HEK293 (cell line): ENCODE measurements at regions of chr17 and their contacts with region 1.

Region 1: GRCh38 chr17:78082988-78083387 is 45.6 kb downstream of the TMC6 start:
- H3K4me3 ChIP-seq: no peak overlapping the region
- H3K27ac ChIP-seq: no peak overlapping the region
- H3K4me1 ChIP-seq: no peaks in the 10 kb centered on the region
- CTCF ChIP-seq: no peak

Region 2: DNA sequence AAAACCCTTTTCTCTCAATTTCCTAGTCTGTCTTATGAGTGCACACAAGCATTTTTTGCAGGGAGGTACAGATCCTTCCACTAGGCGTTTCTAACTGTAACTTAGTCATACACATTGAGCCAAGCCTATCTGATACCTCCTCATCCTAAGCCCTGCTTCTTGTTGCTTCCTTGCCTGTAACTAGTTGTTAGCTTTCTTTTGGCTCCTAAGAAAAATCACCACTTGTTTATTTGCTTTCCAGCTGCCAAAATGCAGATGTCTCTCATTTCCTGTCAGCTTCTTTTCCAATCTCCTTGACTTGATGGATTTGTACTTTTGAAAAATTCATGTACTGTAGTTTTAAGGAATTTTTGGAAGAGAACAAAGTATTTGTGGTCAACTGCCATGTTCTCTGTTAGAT is 50.8 kb before region 1 on chr17:
- CTCF ChIA-PET with region 1: interaction called, 17 read pairs
- POLR2A ChIA-PET with region 1: no interaction called
- H3K4me3 ChIP-seq: no peak overlapping the region
- H3K27ac ChIP-seq: no peak overlapping the region
- H3K4me1 ChIP-seq: no peaks in the 10 kb centered on the region
- CTCF ChIP-seq: no peak

Region 3: DNA sequence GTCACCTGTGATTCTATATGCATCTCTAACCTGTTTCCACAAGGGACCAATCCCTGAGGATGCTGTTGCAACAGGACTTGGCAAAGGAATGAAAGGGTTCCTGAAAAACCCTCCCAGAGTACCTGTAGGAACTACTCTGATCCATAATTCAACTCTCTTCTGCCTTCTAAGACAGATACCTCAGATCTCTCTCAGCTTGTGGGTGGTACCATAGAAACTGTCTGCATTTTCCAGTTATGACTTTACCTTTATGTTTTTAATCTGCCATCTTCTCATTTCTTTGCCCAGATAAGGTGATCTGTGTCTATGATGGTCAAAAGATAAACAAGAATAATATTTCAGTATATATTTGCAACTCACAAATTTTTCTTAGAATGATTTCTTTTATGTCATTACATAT is 19.5 kb before region 1 on chr17:
- CTCF ChIA-PET with region 1: interaction called, 22 read pairs
- POLR2A ChIA-PET with region 1: no interaction called
- H3K4me3 ChIP-seq: no peak overlapping the region
- H3K27ac ChIP-seq: no peak overlapping the region
- H3K4me1 ChIP-seq: no peaks in the 10 kb centered on the region; the same call in 1 of the 2 replicates
- CTCF ChIP-seq: no peak

Region 4: GRCh38 chr17:78104540-78104941 is 21.6 kb after region 1 on chr17:
- CTCF ChIA-PET with region 1: interaction called, 14 read pairs
- POLR2A ChIA-PET with region 1: no interaction called
- H3K4me3 ChIP-seq: no peak overlapping the region
- H3K27ac ChIP-seq: no peak overlapping the region
- H3K4me1 ChIP-seq: no peaks in the 10 kb centered on the region; the same call in 1 of the 2 replicates
- CTCF ChIP-seq: no peak

Region 5: DNA sequence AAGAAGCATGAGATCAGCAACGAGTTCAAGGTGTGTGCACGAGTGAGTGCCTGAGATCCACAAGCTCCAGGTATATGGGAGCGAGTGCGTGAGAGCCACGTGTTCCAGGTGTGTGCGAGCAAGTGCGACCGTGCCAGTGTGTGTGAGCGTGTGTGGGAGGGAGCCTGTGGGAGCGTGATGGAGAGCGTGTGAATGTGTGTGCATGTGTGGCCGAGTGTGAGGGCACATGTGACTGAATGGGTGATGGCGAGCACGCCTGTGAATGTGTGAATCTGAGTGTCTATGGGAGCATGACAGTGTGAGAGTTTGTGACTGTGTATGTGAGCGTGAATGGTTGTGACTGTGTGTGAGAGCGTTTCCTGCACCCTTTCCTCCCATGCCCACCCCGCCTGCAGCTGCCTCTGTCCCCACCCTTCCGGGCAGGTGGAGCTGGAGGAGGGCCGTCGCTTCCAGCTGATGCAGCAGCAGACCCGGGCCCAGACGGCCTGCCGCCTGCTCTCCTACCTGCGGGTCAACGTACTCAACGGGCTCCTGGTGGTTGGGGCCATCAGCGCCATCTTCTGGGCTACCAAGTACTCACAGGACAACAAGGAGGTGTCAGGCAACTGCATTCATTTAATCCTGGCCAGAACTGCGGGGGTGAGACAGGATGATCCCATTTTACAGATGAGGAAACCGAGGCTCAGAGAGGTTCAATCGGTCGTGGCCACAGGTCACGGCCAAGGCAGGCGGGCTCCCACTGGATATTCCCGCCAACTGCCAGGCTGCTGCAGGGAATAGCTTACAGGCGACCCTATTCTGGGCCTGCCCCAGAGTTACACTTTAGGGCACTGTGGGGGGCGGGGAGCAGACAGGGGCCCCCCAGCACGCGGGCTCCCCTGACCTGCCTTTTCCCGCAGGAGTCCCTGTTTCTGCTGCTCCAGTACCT is 51.2 kb after region 1 on chr17:
- CTCF ChIA-PET with region 1: interaction called, 15 read pairs
- POLR2A ChIA-PET with region 1: no interaction called
- H3K4me3 ChIP-seq: no peak overlapping the region
- H3K27ac ChIP-seq: no peak overlapping the region
- H3K4me1 ChIP-seq: no peaks in the 10 kb centered on the region
- CTCF ChIP-seq: peak; percentile 65